ENCODE measurements at regions of chr18 and their contacts with region 1.

Region 1: GRCh38 chr18:54983041-54983686 is 23.9 kb upstream of the CCDC68 start:
- DNase-seq: peak; percentile 31 to 65
- ATAC-seq: peak; percentile 91 to 92
- H3K4me3 ChIP-seq: no peak overlapping the region
- H3K27ac ChIP-seq: peak overlapping the region; percentile 44 to 51; a peak in 4 of 6 replicates
- H3K4me1 ChIP-seq: peaks cover 16% of the 10 kb centered on the region
- CTCF ChIP-seq: peak; percentile 71
- EP300 ChIP-seq: no peak
- POLR2A ChIP-seq: no peak
- RAD21 ChIP-seq: peak; percentile 85 to 86

Region 2: DNA sequence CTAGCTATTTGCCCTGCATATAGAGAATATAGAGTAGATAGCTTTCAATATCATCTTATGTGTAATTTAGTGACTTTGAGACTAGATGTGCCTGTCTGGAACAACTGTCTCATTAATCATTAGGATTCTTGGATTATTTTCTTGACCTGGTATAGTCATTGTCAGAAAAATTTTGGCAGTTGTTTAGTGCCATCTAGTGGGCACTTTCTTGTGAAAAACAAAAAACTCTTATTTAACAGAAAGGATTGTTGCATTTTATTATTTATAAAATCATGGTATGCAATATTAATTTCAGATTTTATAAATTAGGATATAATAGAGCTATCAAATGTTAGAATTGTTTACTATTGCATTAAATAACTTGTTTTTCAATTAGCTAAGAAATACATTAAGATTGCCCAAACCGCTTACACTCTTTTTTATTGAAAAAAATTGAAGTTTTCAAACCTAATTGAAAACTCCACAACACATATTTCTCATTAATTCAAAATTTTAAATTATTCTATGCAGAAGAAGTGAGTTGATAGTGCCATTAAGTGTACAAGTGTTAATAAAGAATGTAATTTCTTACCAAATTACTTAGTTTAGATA is 311.8 kb before region 1 on chr18:
- CTCF ChIA-PET with region 1: interaction called, 16 read pairs
- POLR2A ChIA-PET with region 1: no interaction called
- DNase-seq: peak; percentile 10 to 21
- ATAC-seq: no peak
- H3K4me3 ChIP-seq: no peak overlapping the region
- H3K27ac ChIP-seq: no peak overlapping the region
- H3K4me1 ChIP-seq: peaks cover 10% of the 10 kb centered on the region
- CTCF ChIP-seq: peak; percentile 64
- EP300 ChIP-seq: no peak
- POLR2A ChIP-seq: no peak
- RAD21 ChIP-seq: peak; percentile 65 to 77

Region 3: GRCh38 chr18:54679318-54680149 is 303.6 kb before region 1 on chr18:
- CTCF ChIA-PET with region 1: interaction called, 55 read pairs
- POLR2A ChIA-PET with region 1: no interaction called
- DNase-seq: peak; percentile 47 to 78
- ATAC-seq: peak; percentile 74 to 86; a peak in 5 of 6 replicates
- H3K4me3 ChIP-seq: no peak overlapping the region
- H3K27ac ChIP-seq: peak overlapping the region; percentile 72 to 86
- H3K4me1 ChIP-seq: peaks cover 12% of the 10 kb centered on the region; the same call in 2 of the 3 replicates
- CTCF ChIP-seq: peak; percentile 68
- EP300 ChIP-seq: no peak
- POLR2A ChIP-seq: no peak
- RAD21 ChIP-seq: peak; percentile 90 to 92

Region 4: DNA sequence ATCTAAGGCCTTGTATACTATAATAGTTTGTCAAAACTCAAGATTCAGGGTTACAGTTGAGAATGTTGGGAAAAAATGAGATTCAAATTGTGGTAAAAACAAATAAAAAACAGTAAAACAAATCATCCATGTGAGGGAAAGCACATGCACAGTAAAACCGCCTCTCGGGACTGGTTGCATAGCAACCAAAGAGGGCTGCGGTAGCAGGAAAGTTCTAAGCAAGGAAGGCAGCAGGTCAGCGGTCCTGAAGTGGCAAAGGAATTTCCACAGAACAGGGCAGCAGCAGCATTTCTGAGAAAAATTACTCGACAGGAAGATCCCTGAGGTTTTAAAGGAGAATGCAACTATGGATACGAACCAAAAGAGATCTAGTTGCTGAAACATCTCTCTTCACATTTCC is 298.4 kb before region 1 on chr18:
- CTCF ChIA-PET with region 1: interaction called, 55 read pairs
- POLR2A ChIA-PET with region 1: no interaction called
- DNase-seq: no peak
- ATAC-seq: no peak
- H3K4me3 ChIP-seq: no peak overlapping the region
- H3K27ac ChIP-seq: no peak overlapping the region
- H3K4me1 ChIP-seq: peaks cover 6% of the 10 kb centered on the region; the same call in 2 of the 3 replicates
- CTCF ChIP-seq: no peak
- EP300 ChIP-seq: no peak
- POLR2A ChIP-seq: no peak
- RAD21 ChIP-seq: no peak

Region 5: DNA sequence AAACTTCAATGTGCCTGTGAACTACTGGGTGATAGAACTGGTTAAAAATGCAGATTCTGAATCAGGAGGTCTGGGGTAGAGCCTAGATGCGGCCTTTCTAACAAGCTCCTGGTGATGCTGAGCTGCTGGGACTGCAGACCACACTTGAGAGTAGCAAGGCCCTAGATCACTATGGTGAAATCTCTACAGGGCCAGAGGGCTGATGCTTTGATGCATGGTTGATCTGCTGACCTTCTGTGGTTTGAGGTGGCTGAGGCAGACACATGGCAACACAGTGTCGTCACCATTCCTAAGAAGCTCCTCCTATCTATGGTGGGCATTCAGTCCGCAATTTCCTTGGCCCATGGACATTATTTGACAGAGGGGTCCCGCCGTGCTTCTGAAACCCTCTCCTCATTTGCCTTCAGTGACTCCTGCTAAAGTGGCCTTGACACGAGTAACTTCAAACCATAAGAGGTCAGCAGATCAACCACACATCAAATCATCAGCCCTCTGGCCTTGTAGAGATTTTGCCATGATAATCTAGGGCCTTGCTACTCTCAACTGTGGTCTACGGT is 43.7 kb before region 1 on chr18:
- CTCF ChIA-PET with region 1: no interaction called
- POLR2A ChIA-PET with region 1: no interaction called
- DNase-seq: no peak
- ATAC-seq: no peak
- H3K4me3 ChIP-seq: no peak overlapping the region
- H3K27ac ChIP-seq: no peak overlapping the region
- H3K4me1 ChIP-seq: no peaks in the 10 kb centered on the region
- CTCF ChIP-seq: no peak
- EP300 ChIP-seq: no peak
- POLR2A ChIP-seq: no peak
- RAD21 ChIP-seq: no peak

Region 6: DNA sequence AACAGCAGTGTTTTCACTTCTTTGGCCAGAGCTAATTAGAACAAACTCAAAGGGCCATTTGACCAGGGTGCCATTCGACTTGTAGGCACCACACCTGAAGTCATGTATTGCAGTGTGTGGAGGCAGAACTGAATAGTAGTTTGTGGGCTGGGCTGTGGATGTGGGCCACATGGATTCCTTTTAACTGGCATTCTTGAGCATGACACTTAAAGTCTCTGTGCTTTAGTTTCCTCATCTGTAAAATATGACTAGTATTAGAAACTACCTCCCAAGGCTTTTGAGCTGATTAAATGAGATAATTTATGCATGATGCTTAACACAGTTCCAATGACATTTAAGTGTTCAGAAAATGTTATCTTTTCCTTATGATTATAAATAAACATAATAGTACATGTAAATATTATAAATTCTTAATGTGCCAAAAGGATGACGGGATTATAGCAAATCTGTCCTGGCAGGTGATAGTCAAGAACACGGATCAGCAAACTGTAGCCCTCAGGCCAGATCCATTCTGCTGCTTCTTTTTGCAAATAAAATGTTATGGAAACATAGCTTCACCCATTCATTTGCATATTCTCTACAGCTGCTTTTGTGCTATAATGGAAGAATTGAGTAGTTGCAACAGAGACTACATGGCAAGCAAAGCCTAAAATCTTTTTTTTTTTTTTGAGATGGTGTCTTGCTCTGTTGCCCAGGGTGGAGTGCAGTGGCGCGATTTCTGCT is 12.4 kb after region 1 on chr18:
- CTCF ChIA-PET with region 1: interaction called, 13 read pairs
- POLR2A ChIA-PET with region 1: no interaction called
- DNase-seq: no peak
- ATAC-seq: no peak
- H3K4me3 ChIP-seq: no peak overlapping the region
- H3K27ac ChIP-seq: no peak overlapping the region
- H3K4me1 ChIP-seq: no peaks in the 10 kb centered on the region
- CTCF ChIP-seq: no peak
- EP300 ChIP-seq: no peak
- POLR2A ChIP-seq: no peak
- RAD21 ChIP-seq: no peak

Measured in A549 (cell line).